IMR-90 (cell line): ENCODE measurements at regions of chr2 and their contacts with region 1.

Region 1: GRCh38 chr2:177698281-177698680 is 305.7 kb downstream of the AGPS start:
- DNase-seq: no peak
- ATAC-seq: no peak
- H3K4me3 ChIP-seq: no peak overlapping the region
- H3K27ac ChIP-seq: no peak overlapping the region
- H3K4me1 ChIP-seq: no peaks in the 10 kb centered on the region
- H3K27me3 ChIP-seq: peaks cover 3% of the 10 kb centered on the region; the same call in 1 of the 2 replicates
- CTCF ChIP-seq: no peak
- POLR2A ChIP-seq: no peak
- RAD21 ChIP-seq: no peak

Region 2: DNA sequence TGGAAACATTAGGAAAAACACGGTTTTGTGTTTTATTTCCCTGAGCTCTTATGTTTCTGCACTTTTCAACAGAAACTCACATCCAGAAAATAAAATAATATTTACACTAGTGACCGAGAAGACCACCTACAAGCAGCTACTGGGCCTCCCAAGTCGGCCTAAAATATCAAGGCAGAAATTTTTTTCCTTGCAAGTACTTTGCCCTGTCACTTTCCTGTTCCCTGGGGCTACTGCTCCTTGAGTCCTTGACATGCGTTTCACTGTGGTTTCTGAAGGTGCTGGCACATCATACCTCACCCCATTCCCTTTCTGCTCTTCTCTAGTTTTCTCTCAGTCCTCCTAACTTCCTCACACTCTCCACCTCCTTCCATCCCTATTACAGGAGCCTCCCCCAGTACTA is 26.6 kb before region 1 on chr2:
- CTCF ChIA-PET with region 1: no interaction called
- POLR2A ChIA-PET with region 1: no interaction called
- dilution Hi-C with region 1: no loop called
- in situ Hi-C with region 1: no loop called
- intact Hi-C with region 1: loop called (anchors 1 kb)
- DNase-seq: no peak
- ATAC-seq: no peak
- H3K4me3 ChIP-seq: no peak overlapping the region
- H3K27ac ChIP-seq: no peak overlapping the region
- H3K4me1 ChIP-seq: no peaks in the 10 kb centered on the region
- H3K27me3 ChIP-seq: no peaks in the 10 kb centered on the region
- CTCF ChIP-seq: no peak
- POLR2A ChIP-seq: no peak
- RAD21 ChIP-seq: no peak